ENCODE measurements at regions of chr2 and their contacts with region 1.

Region 1: GRCh38 chr2:150610671-150611279 is 123.3 kb upstream of the RND3 start:
- DNase-seq: no peak
- ATAC-seq: peak in 1 of 4 donors; percentile 41
- H3K4me3 ChIP-seq: no peak overlapping the region
- H3K27ac ChIP-seq: no peak overlapping the region
- H3K4me1 ChIP-seq: peaks cover 0 to 10% (median 0%) of the 10 kb centered on the region in 12 donors
- H3K27me3 ChIP-seq: no peaks in the 10 kb centered on the region
- CTCF ChIP-seq: peak in 11 of 12 donors; percentile 33 to 63 (median 45)
- POLR2A ChIP-seq: no peak

Region 2: GRCh38 chr2:149597668-149598326 is 1013.0 kb before region 1 on chr2:
- intact Hi-C with region 1: loop called in 8 of 10 experiments (anchors 5 to 10 kb)
- DNase-seq: peak in 2 of 5 donors; percentile 16 to 23
- ATAC-seq: peak; percentile 73 to 97 (median 92)
- H3K4me3 ChIP-seq: peak overlapping the region in 9 of 12 donors; percentile 20 to 53 (median 33)
- H3K27ac ChIP-seq: no peak overlapping the region
- H3K4me1 ChIP-seq: peaks cover 0 to 11% (median 0%) of the 10 kb centered on the region in 12 donors
- H3K27me3 ChIP-seq: no peaks in the 10 kb centered on the region
- CTCF ChIP-seq: peak; percentile 67 to 88 (median 78)
- POLR2A ChIP-seq: no peak

Region 3: GRCh38 chr2:150023044-150023443 is 587.7 kb before region 1 on chr2:
- intact Hi-C with region 1: loop called in 1 of 10 experiments (anchors 10 kb)
- DNase-seq: no peak
- ATAC-seq: no peak
- H3K4me3 ChIP-seq: no peak overlapping the region
- H3K27ac ChIP-seq: no peak overlapping the region
- H3K4me1 ChIP-seq: no peaks in the 10 kb centered on the region
- H3K27me3 ChIP-seq: no peaks in the 10 kb centered on the region
- CTCF ChIP-seq: no peak
- POLR2A ChIP-seq: no peak

Region 4: DNA sequence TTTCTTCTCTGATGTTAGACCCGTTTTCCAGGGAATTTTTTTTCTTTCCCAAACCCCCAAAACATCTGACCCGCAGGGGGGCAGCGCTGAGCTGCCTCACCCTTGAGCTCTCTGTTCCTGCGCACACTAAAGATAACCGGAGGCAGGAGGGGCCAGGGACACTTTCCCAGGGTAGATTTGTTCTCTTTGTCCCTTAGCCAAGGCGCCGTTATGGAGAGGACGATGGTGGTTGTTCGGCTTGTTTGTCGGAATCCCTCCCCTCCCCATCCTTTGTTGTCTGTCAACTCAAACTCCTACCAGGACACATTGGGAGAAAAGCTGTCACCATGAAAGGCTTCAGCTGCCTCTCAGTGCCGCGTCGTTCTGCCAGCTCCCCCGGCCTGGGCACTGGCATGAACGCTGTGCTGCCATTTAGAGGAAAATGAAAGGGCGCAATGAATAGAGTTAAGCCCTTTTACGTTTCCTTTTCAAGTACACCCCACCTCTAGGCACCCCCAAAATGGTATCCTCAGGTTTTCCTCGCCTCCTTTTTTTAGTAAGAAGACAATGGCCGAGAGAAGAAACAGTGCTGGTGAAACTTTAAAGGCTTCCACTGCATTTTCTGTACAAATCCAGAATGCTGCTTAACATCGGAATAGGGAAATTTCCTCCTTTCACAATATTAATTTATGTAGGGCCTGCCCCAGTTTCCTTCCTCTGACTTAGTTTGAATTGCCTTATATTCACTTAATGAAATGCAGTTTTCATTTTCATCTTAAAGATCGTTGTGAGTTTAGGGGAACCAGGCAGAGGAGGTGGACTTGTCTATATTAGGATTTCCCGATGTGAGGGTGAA is 185.4 kb before region 1 on chr2:
- intact Hi-C with region 1: loop called in 7 of 10 experiments (anchors 1 to 10 kb)
- DNase-seq: peak in 4 of 5 donors; percentile 19 to 59 (median 49)
- ATAC-seq: peak; percentile 92 to 98 (median 95)
- H3K4me3 ChIP-seq: peak overlapping the region in 9 of 12 donors; percentile 8 to 54 (median 37)
- H3K27ac ChIP-seq: peak overlapping the region in 10 of 12 donors; percentile 12 to 74 (median 50)
- H3K4me1 ChIP-seq: no peaks in the 10 kb centered on the region
- H3K27me3 ChIP-seq: no peaks in the 10 kb centered on the region
- CTCF ChIP-seq: peak in 11 of 12 donors; percentile 10 to 59 (median 47)
- POLR2A ChIP-seq: no peak

Region 5: DNA sequence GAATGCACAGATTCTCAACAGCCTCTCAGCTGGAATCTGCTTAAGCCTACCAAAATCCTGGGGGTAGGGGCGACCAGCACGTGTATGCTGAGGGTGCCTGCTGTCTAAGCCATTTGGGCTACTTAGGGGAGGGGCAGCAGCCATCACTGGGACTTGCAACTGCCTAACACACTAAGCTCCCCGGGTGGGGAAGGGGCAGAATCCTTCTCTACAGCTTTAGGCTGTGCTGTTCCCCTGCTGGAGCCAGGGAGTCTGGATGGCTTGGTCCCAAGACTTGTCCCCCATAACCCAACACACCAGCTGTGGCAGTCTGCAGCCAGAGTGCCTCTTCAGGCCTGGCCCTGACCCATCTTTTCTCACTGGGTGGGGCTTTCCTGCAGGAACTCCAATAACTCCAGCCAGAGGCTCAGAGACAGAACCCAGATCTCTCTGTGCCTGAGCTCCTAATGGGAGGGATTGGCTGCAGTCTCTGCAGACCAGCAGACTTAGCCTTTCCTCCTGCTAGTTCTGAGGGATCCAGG is 182.1 kb after region 1 on chr2:
- intact Hi-C with region 1: loop called in 1 of 10 experiments (anchors 5 kb)
- DNase-seq: peak in 4 of 5 donors; percentile 11 to 47 (median 26)
- ATAC-seq: no peak
- H3K4me3 ChIP-seq: no peak overlapping the region
- H3K27ac ChIP-seq: no peak overlapping the region
- H3K4me1 ChIP-seq: peaks cover 0 to 23% (median 6%) of the 10 kb centered on the region in 12 donors
- H3K27me3 ChIP-seq: no peaks in the 10 kb centered on the region
- CTCF ChIP-seq: no peak
- POLR2A ChIP-seq: no peak